ENCODE measurements at regions of chr5 and their contacts with region 1.

Region 1: GRCh38 chr5:131589510-131590348 is 45.3 kb downstream of the RAPGEF6 start:
- DNase-seq: no peak
- ATAC-seq: peak; percentile 67
- H3K4me3 ChIP-seq: no peak overlapping the region
- H3K27ac ChIP-seq: no peak overlapping the region
- H3K4me1 ChIP-seq: no peaks in the 10 kb centered on the region
- H3K27me3 ChIP-seq: no peaks in the 10 kb centered on the region

Region 2: DNA sequence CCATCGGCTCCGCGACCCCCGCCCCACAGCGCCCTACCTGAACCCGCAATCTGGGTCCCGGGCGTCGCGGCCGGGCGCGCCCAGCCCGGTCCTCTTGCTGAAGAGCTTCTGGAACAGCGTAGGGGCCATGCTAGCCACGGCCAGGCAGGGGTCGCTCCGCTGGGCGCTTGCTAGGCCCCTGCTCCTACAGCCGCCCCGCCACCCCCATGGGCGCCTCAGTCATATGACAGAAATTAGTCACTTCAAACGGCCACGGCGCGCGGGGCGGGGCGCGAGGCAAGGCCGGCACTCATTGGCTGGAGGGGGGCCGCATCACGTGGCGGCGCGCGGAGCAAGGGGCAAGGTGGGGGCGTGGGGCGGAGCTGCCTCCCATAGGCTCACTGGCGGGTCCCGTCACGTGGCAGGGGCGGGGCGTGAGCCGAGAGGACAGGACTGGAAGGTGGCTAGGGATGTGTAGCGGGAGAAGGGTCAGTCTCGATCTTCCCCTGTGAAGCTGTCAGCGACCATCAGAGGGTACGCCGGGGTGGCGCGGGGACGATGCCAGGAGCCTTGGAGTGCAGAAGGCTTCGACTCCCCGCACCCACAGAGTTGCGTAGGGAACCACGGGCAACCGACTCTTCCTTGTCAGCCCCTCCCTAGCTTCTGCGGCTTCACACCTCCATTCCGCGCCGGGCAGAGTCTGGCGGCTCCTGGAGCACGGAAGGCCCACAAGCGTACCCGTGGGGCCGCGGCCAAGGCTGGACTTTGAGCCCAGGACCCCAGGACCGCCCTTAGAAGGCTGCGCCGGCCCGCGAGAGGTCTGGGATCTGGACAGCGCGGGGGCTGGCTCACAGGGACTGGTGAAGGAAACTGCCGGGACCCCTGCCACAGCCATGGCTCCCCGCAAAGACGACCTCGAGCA is 207.3 kb after region 1 on chr5 and contains the start of gene FNIP1:
- intact Hi-C with region 1: loop called in 1 of 2 experiments (anchors 5 kb)
- DNase-seq: peak; percentile 100
- ATAC-seq: peak; percentile 100
- H3K4me3 ChIP-seq: peak within 1 kb of the TSS; percentile 69 to 97
- H3K27ac ChIP-seq: peak within 1 kb of the TSS; percentile 84
- H3K4me1 ChIP-seq: peaks cover 0 to 4% of the 10 kb centered on the region in 2 donors
- H3K27me3 ChIP-seq: no peaks in the 10 kb centered on the region
- total RNA-seq, gene FNIP1: 43.2 to 50.0 TPM

Region 3: GRCh38 chr5:132007399-132008165 is 417.9 kb after region 1 on chr5:
- intact Hi-C with region 1: loop called (anchors 2 kb)
- DNase-seq: peak; percentile 81 to 82
- ATAC-seq: peak; percentile 62
- H3K4me3 ChIP-seq: no peak overlapping the region
- H3K27ac ChIP-seq: no peak overlapping the region
- H3K4me1 ChIP-seq: no peaks in the 10 kb centered on the region
- H3K27me3 ChIP-seq: no peaks in the 10 kb centered on the region

Region 4: GRCh38 chr5:132064738-132065331 is 475.1 kb after region 1 on chr5:
- intact Hi-C with region 1: loop called in 1 of 2 experiments (anchors 2 kb)
- DNase-seq: peak; percentile 80 to 87
- ATAC-seq: peak; percentile 81
- H3K4me3 ChIP-seq: no peak overlapping the region
- H3K27ac ChIP-seq: no peak overlapping the region
- H3K4me1 ChIP-seq: no peaks in the 10 kb centered on the region
- H3K27me3 ChIP-seq: no peaks in the 10 kb centered on the region

Region 5: DNA sequence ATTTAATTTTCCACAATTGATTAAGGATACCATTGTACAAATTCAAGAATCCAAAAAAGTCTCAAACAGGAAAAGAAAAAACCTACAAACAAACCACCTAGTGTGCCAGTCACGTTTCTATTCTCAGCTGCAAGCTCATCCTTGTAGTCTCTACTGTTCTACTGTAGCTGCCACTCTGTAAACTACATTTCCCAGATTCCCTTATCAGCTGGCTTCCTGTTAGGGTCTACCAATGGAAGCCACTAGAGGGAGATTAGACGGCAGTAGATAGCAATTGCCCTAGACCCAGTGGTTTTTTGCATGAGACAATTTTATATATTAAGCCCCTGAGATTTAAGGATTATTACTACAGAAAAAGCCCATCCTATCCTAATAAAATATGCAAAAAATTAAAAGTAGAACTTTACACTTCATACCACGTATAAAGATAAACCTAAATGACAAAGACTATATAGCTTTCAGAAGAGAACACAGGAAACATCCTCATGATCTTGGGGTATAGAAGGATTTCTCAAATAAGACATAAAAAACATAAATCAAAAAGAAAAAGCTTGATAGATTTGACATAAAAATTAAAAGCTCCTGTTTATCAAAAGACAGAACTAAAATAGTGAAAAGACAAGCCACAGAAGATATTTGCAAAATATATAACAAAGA is 600.6 kb after region 1 on chr5:
- intact Hi-C with region 1: loop called in 1 of 2 experiments (anchors 5 kb)
- DNase-seq: no peak
- ATAC-seq: peak; percentile 88
- H3K4me3 ChIP-seq: no peak overlapping the region
- H3K27ac ChIP-seq: no peak overlapping the region
- H3K4me1 ChIP-seq: no peaks in the 10 kb centered on the region
- H3K27me3 ChIP-seq: no peaks in the 10 kb centered on the region

Measured in aorta (tissue), 5 donors.